ENCODE measurements at regions of chr3 and their contacts with region 1.

Region 1: GRCh38 chr3:94862703-94863102 is 799.8 kb downstream of the NSUN3 start:
- DNase-seq: no peak
- ATAC-seq: no peak
- H3K4me3 Mint-ChIP-seq: no peak overlapping the region
- H3K27ac Mint-ChIP-seq: no peak overlapping the region
- H3K4me1 Mint-ChIP-seq: no peaks in the 10 kb centered on the region
- H3K27me3 Mint-ChIP-seq: no peaks in the 10 kb centered on the region

Region 2: GRCh38 chr3:96813134-96813819 is 1950.6 kb after region 1 on chr3:
- CTCF ChIA-PET with region 1: no interaction called
- POLR2A ChIA-PET with region 1: no interaction called
- intact Hi-C with region 1: loop called in 1 of 2 experiments (anchors 2 kb)
- DNase-seq: peak; percentile 85
- ATAC-seq: peak; percentile 94
- H3K4me3 Mint-ChIP-seq: peak overlapping the region; percentile 49
- H3K27ac Mint-ChIP-seq: no peak overlapping the region
- H3K4me1 Mint-ChIP-seq: peaks cover 11% of the 10 kb centered on the region
- H3K27me3 Mint-ChIP-seq: peaks cover 23% of the 10 kb centered on the region

Measured in activated CD4-positive, alpha-beta T cell treated with anti-CD3 and anti-CD28 coated beads for 36 hours (primary cell).